ENCODE measurements at regions of chr1 and their contacts with region 1.

Region 1: DNA sequence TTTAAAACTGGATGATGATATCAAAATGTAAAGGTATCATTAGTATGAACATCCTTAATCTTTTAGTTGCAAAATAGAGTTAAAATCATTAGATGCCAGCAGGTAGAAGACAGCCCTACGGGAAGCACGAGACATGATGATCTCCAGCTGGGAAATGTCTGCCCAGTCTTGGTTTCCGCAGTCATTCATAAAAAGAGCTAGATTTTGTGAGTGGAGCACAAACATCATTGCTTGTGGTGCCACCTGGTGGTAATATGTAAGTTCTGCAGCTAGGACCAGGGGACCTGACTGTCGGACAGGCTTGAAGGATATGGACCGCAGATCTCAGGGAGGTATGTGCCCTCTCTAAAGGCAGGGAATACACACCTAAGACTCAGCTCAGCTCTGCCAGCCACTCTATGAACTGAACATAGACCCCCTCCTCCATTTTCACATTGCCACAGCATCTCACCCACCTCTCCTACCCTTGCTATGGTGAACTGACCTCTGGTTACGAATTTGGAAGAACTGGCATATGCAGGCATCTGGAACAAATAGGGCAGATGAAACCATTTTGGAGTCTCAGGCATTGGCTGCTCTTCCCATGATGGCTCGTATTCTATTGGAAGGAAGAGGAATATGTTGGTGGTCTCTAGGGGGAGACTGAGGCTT is 9.2 kb downstream of the FCMR start:
- DNase-seq: peak; percentile 75
- H3K4me3 ChIP-seq: no peak overlapping the region
- H3K27ac ChIP-seq: no peak overlapping the region
- H3K4me1 ChIP-seq: no peaks in the 10 kb centered on the region
- H3K27me3 ChIP-seq: peaks cover 35 to 36% of the 10 kb centered on the region in 2 experiments
- CTCF ChIP-seq: peak; percentile 71 to 82
- POLR2A ChIP-seq: no peak

Region 2: DNA sequence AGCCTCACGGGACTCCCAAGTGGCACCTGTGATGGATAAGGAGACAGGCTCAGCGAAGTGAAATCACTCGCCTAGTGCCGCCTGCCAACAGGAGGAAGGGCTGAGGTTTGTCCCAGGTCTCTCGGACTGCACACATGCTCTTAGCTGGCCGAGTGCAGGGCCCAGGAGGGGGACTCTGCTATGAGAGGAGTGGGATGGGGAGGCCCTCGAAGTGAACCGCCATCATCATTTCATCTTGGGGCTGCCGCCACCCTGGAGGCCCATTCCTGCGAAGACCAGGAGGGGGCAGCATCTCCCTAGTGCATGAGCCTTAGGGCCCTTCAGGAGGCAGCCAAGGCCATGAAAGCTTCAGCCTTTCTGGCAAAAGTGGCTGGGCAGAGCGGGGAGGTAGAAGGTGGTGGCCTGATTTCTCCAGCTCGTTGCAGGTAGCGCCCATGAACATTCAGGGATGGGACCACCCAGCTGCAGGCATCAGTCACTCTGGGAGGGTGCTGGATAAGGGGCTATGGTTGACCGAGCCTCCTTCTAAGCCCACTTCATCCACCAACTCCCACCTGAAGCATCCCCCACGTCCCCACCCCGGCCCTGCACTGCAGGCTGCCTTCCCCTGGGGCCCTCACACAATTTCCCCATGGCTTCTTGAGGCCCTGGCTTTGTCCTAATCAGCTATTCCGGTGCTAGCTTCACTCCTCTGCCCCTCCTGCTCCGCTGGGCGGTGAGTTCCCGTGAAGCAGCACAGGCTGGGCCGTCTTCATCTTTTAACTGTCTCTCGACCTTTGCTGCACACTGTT is 422.4 kb before region 1 on chr1:
- CTCF ChIA-PET with region 1: interaction called, 12 read pairs
- POLR2A ChIA-PET with region 1: no interaction called
- dilution Hi-C with region 1: no loop called
- intact Hi-C with region 1: loop called (anchors 10 kb)
- DNase-seq: peak; percentile 59
- H3K4me3 ChIP-seq: no peak overlapping the region
- H3K27ac ChIP-seq: no peak overlapping the region
- H3K4me1 ChIP-seq: peaks cover 8% of the 10 kb centered on the region
- H3K27me3 ChIP-seq: no peaks in the 10 kb centered on the region
- CTCF ChIP-seq: peak; percentile 83 to 92
- POLR2A ChIP-seq: no peak

Region 3: DNA sequence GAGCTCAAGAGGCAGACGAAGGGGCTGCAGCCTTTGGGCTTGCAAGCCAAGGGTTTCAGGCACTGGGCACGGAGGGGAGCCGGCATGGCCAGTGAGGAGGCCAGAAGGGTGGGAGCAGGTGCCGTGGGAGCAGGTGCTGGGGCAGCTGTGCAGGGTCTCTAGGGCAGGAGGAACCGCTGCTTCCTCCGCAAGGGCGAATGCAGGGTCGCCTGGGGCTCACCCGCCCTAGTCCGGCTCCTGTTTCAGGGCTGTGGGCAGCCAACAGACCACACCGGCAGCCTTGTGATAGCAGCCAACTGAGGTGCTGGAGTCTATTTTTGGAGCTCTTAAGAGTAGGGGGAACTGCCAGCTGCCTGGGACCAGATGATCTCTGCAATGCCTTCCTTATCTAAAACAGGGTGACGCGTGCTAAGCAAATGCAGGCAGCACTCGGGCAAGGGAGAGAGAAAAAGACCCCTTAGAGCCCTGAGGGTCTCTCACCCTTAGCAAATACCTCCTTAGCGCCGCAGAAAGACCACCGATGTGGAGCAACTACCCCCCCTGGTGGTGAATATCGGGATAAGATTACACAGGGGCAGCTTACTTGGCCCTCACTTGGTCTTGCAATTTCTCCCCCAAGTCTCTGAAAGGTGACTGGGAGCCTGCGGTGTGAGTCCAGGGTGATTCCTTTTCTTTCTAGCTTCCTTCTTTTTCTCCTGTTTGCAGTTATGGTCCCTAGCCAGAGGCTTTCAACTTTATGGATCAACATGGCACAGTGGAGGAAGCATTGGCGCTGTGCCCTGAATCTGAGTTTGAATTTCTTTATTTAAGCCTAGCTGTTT is 248.5 kb before region 1 on chr1:
- CTCF ChIA-PET with region 1: interaction called, 15 read pairs
- POLR2A ChIA-PET with region 1: no interaction called
- dilution Hi-C with region 1: no loop called
- intact Hi-C with region 1: no loop called
- DNase-seq: peak; percentile 76
- H3K4me3 ChIP-seq: no peak overlapping the region
- H3K27ac ChIP-seq: no peak overlapping the region
- H3K4me1 ChIP-seq: no peaks in the 10 kb centered on the region
- H3K27me3 ChIP-seq: peaks cover 36 to 38% of the 10 kb centered on the region in 2 experiments
- CTCF ChIP-seq: peak; percentile 65 to 78
- POLR2A ChIP-seq: no peak

Region 4: GRCh38 chr1:206682111-206682510 is 230.5 kb before region 1 on chr1:
- CTCF ChIA-PET with region 1: no interaction called
- POLR2A ChIA-PET with region 1: no interaction called
- dilution Hi-C with region 1: no loop called
- intact Hi-C with region 1: no loop called
- DNase-seq: no peak
- H3K4me3 ChIP-seq: no peak overlapping the region
- H3K27ac ChIP-seq: no peak overlapping the region
- H3K4me1 ChIP-seq: peaks cover 9% of the 10 kb centered on the region
- H3K27me3 ChIP-seq: peaks cover 37 to 52% of the 10 kb centered on the region in 2 experiments
- CTCF ChIP-seq: no peak
- POLR2A ChIP-seq: no peak

Region 5: DNA sequence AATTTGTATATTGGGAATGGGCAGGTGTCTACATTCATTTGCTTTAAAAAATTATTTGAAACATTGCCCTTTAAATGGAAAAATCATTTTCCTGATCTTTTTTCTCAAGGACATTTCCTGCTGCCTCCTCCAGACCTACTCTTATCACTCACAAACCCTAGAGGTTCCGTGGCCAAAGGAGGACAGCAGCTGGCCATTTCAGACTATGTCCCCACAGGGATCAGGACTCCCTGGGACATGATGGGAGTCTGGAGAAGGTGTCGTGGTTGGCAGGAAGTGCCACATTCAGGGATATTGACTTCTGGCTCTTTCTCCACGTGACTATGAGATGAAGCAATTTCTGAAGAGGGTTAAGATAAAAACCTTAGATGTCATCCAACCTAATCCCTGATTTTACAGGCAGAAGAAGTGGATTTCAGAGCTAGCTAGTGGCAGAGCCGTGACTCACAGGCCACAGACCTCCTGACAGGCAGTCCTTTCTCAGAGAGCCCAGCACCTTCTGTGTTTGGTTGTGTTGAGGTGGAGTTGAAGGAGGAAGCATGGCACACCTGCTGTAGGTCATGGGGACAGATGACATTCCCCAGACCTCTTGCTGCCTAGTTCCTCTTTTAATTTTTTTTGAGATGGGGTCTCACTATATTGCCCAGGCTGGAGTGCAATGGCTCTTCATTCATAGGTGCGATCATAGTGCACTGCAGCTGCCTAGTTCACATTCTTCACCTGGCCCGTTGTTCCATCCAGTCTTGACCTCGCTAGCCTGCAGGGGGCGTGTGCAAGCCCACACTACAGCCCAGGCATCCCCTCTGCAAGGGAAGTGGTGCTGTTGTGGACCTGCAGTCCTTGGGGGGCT is 114.8 kb before region 1 on chr1:
- CTCF ChIA-PET with region 1: interaction called, 7 read pairs
- POLR2A ChIA-PET with region 1: no interaction called
- dilution Hi-C with region 1: no loop called
- intact Hi-C with region 1: loop called (anchors 1 kb)
- DNase-seq: no peak
- H3K4me3 ChIP-seq: no peak overlapping the region
- H3K27ac ChIP-seq: no peak overlapping the region
- H3K4me1 ChIP-seq: no peaks in the 10 kb centered on the region
- H3K27me3 ChIP-seq: no peaks in the 10 kb centered on the region
- CTCF ChIP-seq: peak; percentile 33 to 57
- POLR2A ChIP-seq: no peak

Region 6: DNA sequence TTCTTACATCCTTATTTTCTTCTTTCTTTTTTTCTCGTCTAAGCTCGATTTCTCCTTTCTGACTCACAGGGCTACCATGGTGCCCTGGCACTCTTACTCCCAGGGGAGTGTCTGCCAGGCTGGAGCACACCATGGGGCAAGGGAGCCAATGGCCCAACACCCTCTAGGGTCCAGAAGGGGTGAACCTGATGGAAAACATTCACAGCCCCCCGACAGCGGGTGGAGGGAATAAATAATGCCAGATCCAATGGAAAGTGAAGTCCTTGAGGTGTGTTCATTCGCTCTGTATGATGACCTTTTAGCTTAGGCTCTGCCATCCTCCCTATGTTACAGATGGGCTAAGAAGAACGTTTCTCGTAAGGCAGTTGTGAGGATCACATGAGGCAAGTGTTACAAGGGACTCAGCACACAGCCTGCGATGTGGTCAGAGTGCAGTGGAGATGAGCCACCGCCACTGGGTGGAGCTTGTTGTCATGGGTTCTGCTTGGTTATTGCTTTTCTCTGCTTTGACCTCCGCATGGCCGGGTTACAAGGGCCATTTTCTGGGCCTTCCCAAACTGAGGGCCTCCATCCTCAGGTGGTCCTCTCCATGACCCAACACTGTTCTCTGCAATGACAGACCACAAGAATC is 12.7 kb after region 1 on chr1:
- CTCF ChIA-PET with region 1: interaction called, 13 read pairs
- POLR2A ChIA-PET with region 1: no interaction called
- dilution Hi-C with region 1: no loop called
- intact Hi-C with region 1: no loop called
- DNase-seq: no peak
- H3K4me3 ChIP-seq: no peak overlapping the region
- H3K27ac ChIP-seq: no peak overlapping the region
- H3K4me1 ChIP-seq: no peaks in the 10 kb centered on the region
- H3K27me3 ChIP-seq: no peaks in the 10 kb centered on the region
- CTCF ChIP-seq: no peak
- POLR2A ChIP-seq: no peak

Measured in endothelial cell of umbilical vein (primary cell).